GM12878 (cell line): ENCODE measurements at regions of chr6 and their contacts with region 1.

Region 1: DNA sequence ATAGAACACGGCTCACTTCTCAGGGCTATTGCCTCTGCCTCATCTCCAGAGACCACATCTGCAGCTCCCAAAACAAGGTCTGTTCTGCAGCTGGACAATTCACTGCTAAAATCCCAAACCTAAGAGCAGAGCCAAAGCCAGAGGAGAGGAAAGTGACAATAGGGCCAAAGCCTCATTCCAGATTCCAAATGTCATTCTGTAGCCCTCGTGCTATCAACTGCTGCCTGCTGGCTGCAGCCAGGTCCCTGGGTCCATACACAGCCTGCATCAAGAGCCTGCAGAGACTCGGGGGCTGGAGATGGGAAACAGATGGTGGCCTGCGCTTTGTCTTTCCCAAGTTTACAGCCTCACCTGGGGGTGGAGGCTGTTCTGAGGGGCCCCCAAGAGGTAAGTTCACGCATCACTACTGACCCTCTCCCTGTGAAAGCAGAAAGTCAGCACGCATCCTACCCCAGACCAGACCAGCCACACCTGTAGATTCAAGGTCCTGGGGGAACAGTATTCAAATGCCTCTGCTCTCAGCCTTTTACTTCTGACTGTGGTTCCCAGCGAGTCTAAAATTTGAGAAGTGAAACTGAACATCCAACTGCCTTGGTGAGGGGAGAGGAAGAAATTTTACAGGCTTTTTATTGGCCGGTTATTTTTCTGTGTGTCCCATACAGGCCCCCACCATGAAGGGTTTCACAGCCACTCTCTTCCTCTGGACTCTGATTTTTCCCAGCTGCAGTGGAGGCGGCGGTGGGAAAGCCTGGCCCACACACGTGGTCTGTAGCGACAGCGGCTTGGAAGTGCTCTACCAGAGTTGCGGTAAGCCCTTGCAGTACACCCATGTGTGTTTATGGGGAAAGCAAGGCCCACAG is at the start of gene LY86:
- DNase-seq: peak; percentile 97
- ATAC-seq: peak; percentile 54
- H3K4me3 ChIP-seq: peak within 1 kb of the TSS; percentile 83
- H3K27ac ChIP-seq: peak within 1 kb of the TSS; percentile 100
- H3K4me1 ChIP-seq: peaks cover 40% of the 10 kb centered on the region
- H3K27me3 ChIP-seq: no peaks in the 10 kb centered on the region
- CTCF ChIP-seq: peak in 1 of 3 experiments; percentile 23; a peak in 2 of 6 replicates
- EP300 ChIP-seq: peak; percentile 30 to 80; a peak in 3 of 4 replicates
- POLR2A ChIP-seq: peak; percentile 77
- RAD21 ChIP-seq: peak; percentile 21; the same call in 1 of the 2 replicates
- polyA plus RNA-seq, gene LY86: 306 to 457 TPM

Region 2: DNA sequence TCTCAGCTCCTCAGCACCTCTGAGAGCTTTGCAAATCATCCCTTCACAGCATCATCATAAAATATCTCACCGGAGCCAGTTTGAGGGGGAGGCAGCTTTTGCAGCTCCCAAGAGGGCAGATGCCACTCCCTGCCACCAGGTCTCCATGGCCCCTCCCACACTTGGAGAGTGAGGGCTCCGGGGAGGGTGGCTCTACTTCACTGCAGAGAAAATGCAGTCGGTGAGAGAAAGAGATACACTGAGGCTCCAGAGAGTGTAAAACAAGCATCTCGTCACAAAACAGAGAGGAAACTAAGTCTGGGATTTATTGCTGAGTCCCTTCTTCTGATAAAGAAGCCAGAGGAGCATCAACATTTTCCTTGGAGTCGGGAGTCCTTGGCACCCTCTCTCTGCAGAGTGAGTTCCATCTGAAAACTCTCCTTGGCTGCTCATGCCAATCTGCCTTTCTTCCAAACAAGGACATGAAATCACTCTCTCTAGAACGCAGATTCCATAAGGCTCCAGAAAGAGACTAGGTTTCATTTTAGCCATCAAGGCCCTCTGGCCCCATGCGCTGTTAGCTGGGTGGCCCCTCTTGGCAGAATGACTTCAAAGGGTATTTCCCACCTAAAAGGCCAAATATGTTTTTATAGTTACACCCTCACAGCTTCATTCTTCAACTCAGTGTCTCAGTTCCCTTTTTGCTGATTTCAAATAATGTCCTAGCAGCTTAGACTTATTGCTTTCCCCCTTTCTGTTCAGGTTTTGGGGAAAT is 197.3 kb before region 1 on chr6:
- CTCF ChIA-PET with region 1: interaction called, 7 read pairs
- POLR2A ChIA-PET with region 1: interaction called, 13 read pairs
- RAD21 ChIA-PET with region 1: interaction called, 29 read pairs
- SMC1A ChIA-PET with region 1: interaction called, 10 read pairs
- in situ Hi-C with region 1: no loop called
- intact Hi-C with region 1: loop called (anchors 1 kb)
- DNase-seq: peak; percentile 78
- ATAC-seq: peak; percentile 74
- H3K4me3 ChIP-seq: peak overlapping the region; percentile 40
- H3K27ac ChIP-seq: peak overlapping the region; percentile 96
- H3K4me1 ChIP-seq: peaks cover 37% of the 10 kb centered on the region
- H3K27me3 ChIP-seq: no peaks in the 10 kb centered on the region
- CTCF ChIP-seq: no peak
- EP300 ChIP-seq: peak; percentile 40 to 71; a peak in 3 of 4 replicates
- POLR2A ChIP-seq: peak; percentile 40; the same call in 1 of the 2 replicates
- RAD21 ChIP-seq: peak; percentile 21; the same call in 1 of the 2 replicates

Region 3: GRCh38 chr6:6604566-6604965 is 16.3 kb after region 1 on chr6:
- CTCF ChIA-PET with region 1: interaction called, 4 read pairs
- POLR2A ChIA-PET with region 1: interaction called, 10 read pairs
- RAD21 ChIA-PET with region 1: interaction called, 15 read pairs
- SMC1A ChIA-PET with region 1: interaction called, 65 read pairs
- in situ Hi-C with region 1: no loop called
- intact Hi-C with region 1: no loop called
- DNase-seq: no peak
- ATAC-seq: no peak
- H3K4me3 ChIP-seq: no peak overlapping the region
- H3K27ac ChIP-seq: no peak overlapping the region
- H3K4me1 ChIP-seq: peaks cover 6% of the 10 kb centered on the region
- H3K27me3 ChIP-seq: no peaks in the 10 kb centered on the region
- CTCF ChIP-seq: no peak
- EP300 ChIP-seq: no peak
- POLR2A ChIP-seq: no peak
- RAD21 ChIP-seq: no peak

Region 4: DNA sequence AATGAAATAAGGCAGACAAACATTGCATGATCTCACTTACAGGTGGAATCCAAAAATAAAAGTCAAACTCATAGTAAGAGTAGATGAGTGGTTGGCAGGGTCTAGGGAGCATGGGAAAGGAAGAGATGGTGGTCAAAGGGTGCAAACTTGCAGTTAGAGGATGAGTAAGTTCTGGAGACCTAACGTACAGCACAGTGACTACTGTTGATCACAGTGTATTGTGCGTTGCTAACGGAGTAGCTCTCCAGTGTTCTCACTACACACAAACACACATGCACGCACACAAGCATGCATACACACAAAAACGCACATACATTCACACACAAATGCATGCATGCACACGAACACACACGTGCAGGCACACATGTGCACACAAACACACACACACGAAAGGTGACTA is 55.1 kb after region 1 on chr6:
- CTCF ChIA-PET with region 1: interaction called, 5 read pairs
- POLR2A ChIA-PET with region 1: interaction called, 25 read pairs
- RAD21 ChIA-PET with region 1: interaction called, 52 read pairs
- SMC1A ChIA-PET with region 1: interaction called, 14 read pairs
- in situ Hi-C with region 1: no loop called
- intact Hi-C with region 1: loop called (anchors 1 kb)
- DNase-seq: peak; percentile 91
- ATAC-seq: peak; percentile 93
- H3K4me3 ChIP-seq: no peak overlapping the region
- H3K27ac ChIP-seq: peak overlapping the region; percentile 86
- H3K4me1 ChIP-seq: peaks cover 21% of the 10 kb centered on the region
- H3K27me3 ChIP-seq: no peaks in the 10 kb centered on the region
- CTCF ChIP-seq: no peak
- EP300 ChIP-seq: peak; percentile 84 to 99; a peak in 3 of 4 replicates
- POLR2A ChIP-seq: 0 out of 2 replicates have a peak, but pooled peaks have one; percentile 32
- RAD21 ChIP-seq: peak; percentile 35; the same call in 1 of the 2 replicates

Region 5: DNA sequence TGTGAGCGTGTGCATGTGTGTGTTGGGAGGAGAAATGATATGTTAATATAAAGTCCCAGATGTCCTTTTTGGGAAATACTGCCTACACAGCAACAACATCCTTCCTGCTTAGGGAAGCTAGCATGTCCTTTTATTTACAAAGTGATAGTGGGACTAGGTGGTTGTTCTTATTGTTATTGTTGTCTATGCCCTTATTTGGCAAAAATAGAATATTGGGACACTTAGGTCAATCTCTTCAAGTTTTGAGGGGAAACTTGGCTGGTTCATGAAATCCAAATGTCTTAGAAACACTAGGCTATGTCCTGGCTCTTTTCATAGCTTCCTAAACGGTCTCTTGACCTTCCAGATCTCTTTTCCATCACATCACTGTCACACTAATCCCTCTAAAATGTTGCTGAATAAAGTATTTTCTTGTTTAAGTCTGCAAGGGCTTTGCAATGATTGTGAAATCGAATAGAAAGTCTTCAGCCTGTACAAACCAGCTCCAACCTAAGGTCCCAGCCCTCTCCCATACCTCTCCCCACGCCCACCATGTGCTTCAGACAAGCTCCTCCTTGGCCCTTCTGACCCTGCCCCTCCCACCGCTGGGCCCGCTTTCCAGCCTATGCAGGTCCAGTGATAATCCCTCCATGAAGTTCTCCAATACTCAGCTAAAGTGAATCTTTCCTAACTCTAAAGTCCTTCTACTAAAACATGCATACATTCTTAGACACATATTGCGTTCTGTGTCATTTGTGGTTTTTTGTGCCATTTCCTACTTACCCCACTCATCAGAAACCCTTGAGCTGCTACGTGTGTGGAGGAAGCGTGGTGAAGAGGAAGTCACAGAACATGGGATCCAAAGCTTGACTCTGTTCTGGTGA is 205.3 kb after region 1 on chr6:
- CTCF ChIA-PET with region 1: no interaction called
- POLR2A ChIA-PET with region 1: no interaction called
- RAD21 ChIA-PET with region 1: no interaction called
- SMC1A ChIA-PET with region 1: no interaction called
- in situ Hi-C with region 1: no loop called
- intact Hi-C with region 1: loop called (anchors 5 kb)
- DNase-seq: no peak
- ATAC-seq: no peak
- H3K4me3 ChIP-seq: no peak overlapping the region
- H3K27ac ChIP-seq: no peak overlapping the region
- H3K4me1 ChIP-seq: peaks cover 28% of the 10 kb centered on the region
- H3K27me3 ChIP-seq: no peaks in the 10 kb centered on the region
- CTCF ChIP-seq: no peak
- EP300 ChIP-seq: no peak
- POLR2A ChIP-seq: no peak
- RAD21 ChIP-seq: no peak

Region 6: GRCh38 chr6:7312616-7313504 is 724.6 kb after region 1 on chr6 and contains the start of gene SSR1:
- CTCF ChIA-PET with region 1: no interaction called
- POLR2A ChIA-PET with region 1: no interaction called
- RAD21 ChIA-PET with region 1: no interaction called
- SMC1A ChIA-PET with region 1: no interaction called
- in situ Hi-C with region 1: no loop called
- intact Hi-C with region 1: loop called (anchors 10 kb)
- DNase-seq: peak; percentile 85
- ATAC-seq: peak; percentile 99
- H3K4me3 ChIP-seq: peak within 1 kb of the TSS; percentile 95
- H3K27ac ChIP-seq: peak within 1 kb of the TSS; percentile 82
- H3K4me1 ChIP-seq: peaks cover 6% of the 10 kb centered on the region
- H3K27me3 ChIP-seq: no peaks in the 10 kb centered on the region
- CTCF ChIP-seq: no peak
- EP300 ChIP-seq: no peak
- POLR2A ChIP-seq: peak; percentile 96
- RAD21 ChIP-seq: no peak
- polyA plus RNA-seq, gene SSR1: 123 to 151 TPM